ENCODE measurements at regions of chr20 and their contacts with region 1.

Region 1: DNA sequence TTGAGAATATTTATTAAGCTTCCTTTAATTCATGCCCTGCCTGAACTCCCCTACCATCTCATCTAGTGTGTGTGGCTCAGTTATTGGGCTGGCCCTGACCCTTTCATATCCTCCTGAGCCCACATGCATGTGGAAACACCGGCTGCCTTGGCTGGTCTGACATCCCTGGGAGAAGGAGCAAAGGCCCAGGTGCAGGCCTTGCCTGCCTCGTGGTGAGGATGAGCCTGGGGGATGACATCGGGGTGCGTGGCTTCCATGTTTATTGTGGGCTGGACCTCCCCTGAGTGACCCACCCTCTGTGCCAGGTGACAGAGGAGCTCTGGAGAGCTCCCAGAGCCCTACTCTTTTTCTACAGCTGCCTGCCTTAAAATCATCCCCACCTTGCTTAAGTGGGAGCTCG is 69.1 kb downstream of the FOXA2 start:
- DNase-seq: no peak
- H3K4me3 ChIP-seq: no peak overlapping the region
- H3K27ac ChIP-seq: no peak overlapping the region
- H3K4me1 ChIP-seq: no peaks in the 10 kb centered on the region
- H3K27me3 ChIP-seq: peaks cover 0 to 4% of the 10 kb centered on the region in 2 donors
- CTCF ChIP-seq: no peak
- POLR2A ChIP-seq: no peak

Region 2: GRCh38 chr20:22460231-22460630 is 55.0 kb before region 1 on chr20:
- intact Hi-C with region 1: loop called (anchors 2 kb)
- DNase-seq: no peak
- H3K4me3 ChIP-seq: no peak overlapping the region
- H3K27ac ChIP-seq: no peak overlapping the region
- H3K4me1 ChIP-seq: no peaks in the 10 kb centered on the region
- H3K27me3 ChIP-seq: peaks cover 0 to 46% of the 10 kb centered on the region in 2 donors
- CTCF ChIP-seq: no peak
- POLR2A ChIP-seq: no peak

Region 3: DNA sequence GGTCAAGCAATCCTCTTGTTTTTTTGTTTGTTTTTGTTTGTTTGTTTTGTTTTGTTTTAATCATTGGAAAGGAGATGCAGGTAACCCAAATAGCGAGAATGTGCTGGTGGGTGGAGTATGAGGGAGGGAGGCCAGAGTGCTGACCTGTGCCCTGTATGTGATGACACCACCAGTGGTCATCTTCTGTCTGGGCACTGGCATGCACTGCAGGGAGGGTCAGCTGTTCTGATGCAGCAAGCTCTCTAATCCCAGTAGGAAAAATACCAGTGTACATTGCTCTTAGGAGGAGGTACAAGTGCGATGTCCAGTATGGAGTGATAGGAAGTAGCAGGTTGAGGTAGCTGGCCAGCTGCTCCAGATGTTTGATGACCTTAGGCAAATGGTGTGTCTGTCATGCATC is 1238.3 kb after region 1 on chr20:
- intact Hi-C with region 1: no loop called
- DNase-seq: no peak
- H3K4me3 ChIP-seq: no peak overlapping the region
- H3K27ac ChIP-seq: no peak overlapping the region
- H3K4me1 ChIP-seq: no peaks in the 10 kb centered on the region
- H3K27me3 ChIP-seq: no peaks in the 10 kb centered on the region
- CTCF ChIP-seq: no peak
- POLR2A ChIP-seq: no peak

Measured in breast epithelium (tissue), 4 donors.